ENCODE measurements at regions of chr22 and their contacts with region 1.

Region 1: GRCh38 chr22:40867109-40867508 is 5.2 kb upstream of the DNAJB7 start:
- DNase-seq: no peak
- H3K4me3 ChIP-seq: no peak overlapping the region
- CTCF ChIP-seq: no peak

Region 2: GRCh38 chr22:40856513-40857308 is 10.4 kb before region 1 on chr22 and contains the starts of genes ST13 and XPNPEP3:
- CTCF ChIA-PET with region 1: interaction called, 14 read pairs
- POLR2A ChIA-PET with region 1: interaction called, 3 read pairs
- DNase-seq: peak; percentile 75
- H3K4me3 ChIP-seq: peak within 1 kb of the TSS; percentile 97
- CTCF ChIP-seq: peak; percentile 16

Region 3: GRCh38 chr22:41237707-41238569 is 370.8 kb after region 1 on chr22:
- CTCF ChIA-PET with region 1: no interaction called
- POLR2A ChIA-PET with region 1: no interaction called
- DNase-seq: no peak
- H3K4me3 ChIP-seq: peak overlapping the region; percentile 38
- CTCF ChIP-seq: peak; percentile 47

Measured in AG04449 (cell line).